SK-N-SH (cell line): ENCODE measurements at regions of chr4 and their contacts with region 1.

Region 1: DNA sequence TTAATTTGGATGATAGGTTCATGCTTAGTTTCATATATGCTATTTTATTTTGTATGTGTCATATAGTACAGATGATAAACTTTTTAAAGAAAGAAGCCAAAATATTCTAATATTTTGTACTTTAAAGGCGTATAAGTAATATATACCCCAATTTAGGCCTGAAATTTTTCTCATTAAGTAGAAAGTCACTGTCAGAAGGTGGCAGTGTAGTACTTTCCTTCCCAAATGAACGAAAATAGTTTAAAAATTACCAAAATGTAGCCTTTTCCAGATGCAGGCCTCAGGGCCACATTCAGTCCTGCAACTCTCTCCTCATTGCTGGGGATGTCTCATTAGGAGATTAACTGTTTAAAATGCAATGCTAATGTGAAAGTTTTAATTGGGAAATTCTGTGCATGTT is 1263.6 kb downstream of the C4orf33 start:
- DNase-seq: peak; percentile 16
- H3K4me3 ChIP-seq: no peak overlapping the region
- H3K27ac ChIP-seq: no peak overlapping the region
- H3K4me1 ChIP-seq: no peaks in the 10 kb centered on the region; a peak in 1 of 4 replicates
- H3K27me3 ChIP-seq: no peaks in the 10 kb centered on the region; the same call in 1 of the 2 replicates
- CTCF ChIP-seq: peak; percentile 75
- EP300 ChIP-seq: no peak
- RAD21 ChIP-seq: peak; percentile 79

Region 2: DNA sequence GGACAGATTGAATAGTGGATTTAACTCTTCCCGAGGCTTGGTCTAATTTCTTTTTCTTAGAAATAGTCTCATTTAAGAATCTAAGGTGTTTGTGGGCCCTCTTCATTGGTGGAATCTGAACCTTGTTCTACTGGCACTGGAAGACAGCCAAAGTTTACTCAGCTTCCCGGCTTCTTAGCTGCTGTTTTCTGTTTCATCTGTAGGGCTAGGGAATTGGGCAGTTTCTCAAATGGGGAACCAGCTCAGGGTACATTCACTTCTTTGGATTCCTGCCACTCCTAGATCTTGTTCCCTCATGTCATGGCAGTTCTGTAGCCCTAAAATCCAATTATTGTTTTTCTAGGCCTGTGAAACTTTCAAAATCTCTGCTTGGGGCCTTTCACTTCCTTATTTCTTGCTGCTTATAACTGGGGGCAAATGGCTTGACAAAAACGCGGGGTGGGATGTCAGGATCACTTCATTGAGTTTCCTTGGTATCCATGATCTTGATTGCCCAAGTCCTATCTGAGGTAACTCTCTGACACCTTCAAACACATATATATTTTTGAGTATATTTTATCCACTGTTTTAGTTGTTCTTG is 278.6 kb before region 1 on chr4:
- CTCF ChIA-PET with region 1: no interaction called
- POLR2A ChIA-PET with region 1: no interaction called
- DNase-seq: no peak
- H3K4me3 ChIP-seq: no peak overlapping the region
- H3K27ac ChIP-seq: no peak overlapping the region
- H3K4me1 ChIP-seq: 0 out of 4 replicates have a peak, but pooled peaks cover 0 to 4% of the 10 kb centered on the region in 2 experiments
- H3K27me3 ChIP-seq: no peaks in the 10 kb centered on the region
- CTCF ChIP-seq: no peak
- EP300 ChIP-seq: no peak
- RAD21 ChIP-seq: no peak

Region 3: GRCh38 chr4:130808492-130808891 is 448.9 kb after region 1 on chr4:
- CTCF ChIA-PET with region 1: interaction called, 11 read pairs
- POLR2A ChIA-PET with region 1: no interaction called
- DNase-seq: peak; percentile 7
- H3K4me3 ChIP-seq: peak overlapping the region in 1 of 2 experiments; percentile 24; a peak in 1 of 4 replicates
- H3K27ac ChIP-seq: no peak overlapping the region
- H3K4me1 ChIP-seq: no peaks in the 10 kb centered on the region
- H3K27me3 ChIP-seq: no peaks in the 10 kb centered on the region
- CTCF ChIP-seq: peak; percentile 67
- EP300 ChIP-seq: no peak
- RAD21 ChIP-seq: peak; percentile 66